ENCODE measurements at regions of chr2 and their contacts with region 1.

Region 1: GRCh38 chr2:175282290-175282689 is 100.8 kb upstream of the ATP5MC3 start:
- DNase-seq: peak in 1 of 2 donors; percentile 28
- ATAC-seq: peak; percentile 68 to 76 (median 69)
- H3K4me3 ChIP-seq: no peak overlapping the region
- H3K4me3 Mint-ChIP-seq: no peak overlapping the region
- H3K27ac ChIP-seq: no peak overlapping the region
- H3K27ac Mint-ChIP-seq: no peak overlapping the region
- H3K4me1 ChIP-seq: no peaks in the 10 kb centered on the region
- H3K4me1 Mint-ChIP-seq: peaks cover 4 to 5% of the 10 kb centered on the region in 2 donors
- H3K27me3 ChIP-seq: peaks cover 3% of the 10 kb centered on the region
- H3K27me3 Mint-ChIP-seq: peaks cover 6 to 16% of the 10 kb centered on the region in 2 donors
- CTCF ChIP-seq: peak; percentile 64

Region 2: GRCh38 chr2:175111200-175111657 is 171.1 kb before region 1 on chr2:
- intact Hi-C with region 1: loop called (anchors 1 kb)
- DNase-seq: peak in 1 of 2 donors; percentile 72
- ATAC-seq: peak; percentile 68 to 75 (median 73)
- H3K4me3 ChIP-seq: no peak overlapping the region
- H3K4me3 Mint-ChIP-seq: no peak overlapping the region
- H3K27ac ChIP-seq: no peak overlapping the region
- H3K27ac Mint-ChIP-seq: peak overlapping the region in 1 of 2 donors; percentile 58
- H3K4me1 ChIP-seq: no peaks in the 10 kb centered on the region
- H3K4me1 Mint-ChIP-seq: no peaks in the 10 kb centered on the region
- H3K27me3 ChIP-seq: no peaks in the 10 kb centered on the region
- H3K27me3 Mint-ChIP-seq: no peaks in the 10 kb centered on the region
- CTCF ChIP-seq: peak; percentile 72

Region 3: GRCh38 chr2:175203621-175204496 is 78.4 kb before region 1 on chr2:
- intact Hi-C with region 1: loop called (anchors 1 kb)
- DNase-seq: peak; percentile 35 to 67
- ATAC-seq: peak; percentile 78 to 84 (median 82)
- H3K4me3 ChIP-seq: no peak overlapping the region
- H3K4me3 Mint-ChIP-seq: no peak overlapping the region
- H3K27ac ChIP-seq: no peak overlapping the region
- H3K27ac Mint-ChIP-seq: no peak overlapping the region
- H3K4me1 ChIP-seq: peaks cover 11% of the 10 kb centered on the region
- H3K4me1 Mint-ChIP-seq: peaks cover 25 to 26% of the 10 kb centered on the region in 2 donors
- H3K27me3 ChIP-seq: peaks cover 8% of the 10 kb centered on the region
- H3K27me3 Mint-ChIP-seq: peaks cover 15 to 18% of the 10 kb centered on the region in 2 donors
- CTCF ChIP-seq: peak; percentile 63

Region 4: DNA sequence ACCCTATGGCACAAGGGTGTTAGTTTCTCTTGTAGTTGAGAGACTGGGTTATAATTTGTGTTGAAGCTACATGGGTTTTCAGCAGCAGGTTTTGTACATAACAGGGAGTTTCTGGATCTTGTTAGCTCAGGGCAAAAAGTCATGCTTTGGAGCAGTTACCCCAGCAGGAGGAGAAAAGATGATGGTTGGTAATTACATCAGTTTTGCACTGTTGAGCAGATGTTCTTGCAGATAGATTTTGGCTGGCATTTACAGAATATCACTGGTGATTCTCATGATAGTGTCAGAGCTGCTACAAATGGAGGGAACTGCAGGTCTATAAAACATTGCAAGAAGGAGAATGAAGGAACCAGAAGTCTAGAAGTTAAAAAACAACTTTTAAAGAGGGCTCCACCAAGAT is 114.4 kb after region 1 on chr2:
- intact Hi-C with region 1: no loop called
- DNase-seq: no peak
- ATAC-seq: no peak
- H3K4me3 ChIP-seq: no peak overlapping the region
- H3K4me3 Mint-ChIP-seq: no peak overlapping the region
- H3K27ac ChIP-seq: no peak overlapping the region
- H3K27ac Mint-ChIP-seq: no peak overlapping the region
- H3K4me1 ChIP-seq: no peaks in the 10 kb centered on the region
- H3K4me1 Mint-ChIP-seq: no peaks in the 10 kb centered on the region
- H3K27me3 ChIP-seq: no peaks in the 10 kb centered on the region
- H3K27me3 Mint-ChIP-seq: peaks cover 14 to 29% of the 10 kb centered on the region in 2 donors
- CTCF ChIP-seq: no peak

Region 5: GRCh38 chr2:175567435-175568061 is 285.3 kb after region 1 on chr2:
- intact Hi-C with region 1: no loop called
- DNase-seq: no peak
- ATAC-seq: peak; percentile 84 to 88 (median 87)
- H3K4me3 ChIP-seq: no peak overlapping the region
- H3K4me3 Mint-ChIP-seq: peak overlapping the region; percentile 55
- H3K27ac ChIP-seq: peak overlapping the region; percentile 53
- H3K27ac Mint-ChIP-seq: peak overlapping the region; percentile 58 to 68
- H3K4me1 ChIP-seq: peaks cover 13% of the 10 kb centered on the region
- H3K4me1 Mint-ChIP-seq: peaks cover 17 to 20% of the 10 kb centered on the region in 2 donors
- H3K27me3 ChIP-seq: no peaks in the 10 kb centered on the region
- H3K27me3 Mint-ChIP-seq: peaks cover 29 to 46% of the 10 kb centered on the region in 2 donors
- CTCF ChIP-seq: no peak